H1 (cell line): ENCODE measurements at regions of chr14 and their contacts with region 1.

Region 1: DNA sequence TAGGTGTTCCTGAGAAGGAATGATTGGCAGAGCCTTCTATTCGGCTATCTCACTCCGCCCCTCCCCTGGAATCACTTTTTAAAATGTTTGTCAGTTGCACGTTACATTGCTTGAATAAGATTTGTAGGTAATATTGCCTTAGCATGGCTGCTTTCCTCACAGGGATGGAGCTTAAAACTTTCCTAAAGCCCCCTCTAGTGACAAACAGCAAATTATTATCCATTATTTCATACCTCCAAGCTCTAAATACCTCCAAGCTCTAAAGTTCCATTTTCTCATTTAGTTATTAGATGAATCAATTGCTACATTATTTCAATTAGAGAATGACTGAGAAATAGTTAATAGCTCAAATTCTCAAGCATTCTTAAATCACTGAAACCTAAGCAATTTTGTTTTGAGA is 5.1 kb upstream of the SPATA7 start:
- DNase-seq: no peak
- H3K4me3 ChIP-seq: no peak overlapping the region
- H3K27ac ChIP-seq: no peak overlapping the region
- H3K4me1 ChIP-seq: peaks cover 1 to 5% (median 4%) of the 10 kb centered on the region in 4 experiments; a peak in 4 of 7 replicates
- H3K27me3 ChIP-seq: no peaks in the 10 kb centered on the region
- CTCF ChIP-seq: peak in 1 of 3 experiments; percentile 19; a peak in 2 of 4 replicates
- EP300 ChIP-seq: no peak
- POLR2A ChIP-seq: no peak
- RAD21 ChIP-seq: peak; percentile 51

Region 2: DNA sequence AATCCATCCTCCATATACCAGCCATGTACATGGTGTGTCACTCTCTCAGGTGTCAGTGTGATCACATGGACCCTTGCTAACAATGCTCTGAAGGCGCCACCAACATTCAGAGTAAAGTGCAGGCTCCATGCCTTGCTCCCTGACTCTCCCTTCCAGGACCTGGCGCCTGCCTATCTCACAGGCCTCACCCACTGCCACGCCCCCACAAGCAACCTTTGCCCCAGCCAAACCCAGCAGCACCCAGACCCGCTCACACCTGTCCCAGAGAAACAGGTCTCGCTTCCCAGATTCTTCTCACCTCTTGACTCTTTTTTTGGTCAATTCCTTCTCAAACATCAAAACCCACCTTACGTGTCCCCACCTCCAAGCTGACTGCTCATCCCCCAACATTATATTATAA is 109.6 kb before region 1 on chr14:
- CTCF ChIA-PET with region 1: interaction called, 13 read pairs
- POLR2A ChIA-PET with region 1: no interaction called
- DNase-seq: peak; percentile 19 to 71
- H3K4me3 ChIP-seq: no peak overlapping the region
- H3K27ac ChIP-seq: no peak overlapping the region
- H3K4me1 ChIP-seq: peaks cover 0 to 4% (median 2%) of the 10 kb centered on the region in 4 experiments; a peak in 3 of 7 replicates
- H3K27me3 ChIP-seq: no peaks in the 10 kb centered on the region; a peak in 1 of 7 replicates
- CTCF ChIP-seq: no peak
- EP300 ChIP-seq: no peak
- POLR2A ChIP-seq: no peak
- RAD21 ChIP-seq: no peak

Region 3: GRCh38 chr14:88364710-88365413 is 15.5 kb before region 1 on chr14:
- CTCF ChIA-PET with region 1: interaction called, 16 read pairs
- POLR2A ChIA-PET with region 1: no interaction called
- DNase-seq: peak in 1 of 2 experiments; percentile 49
- H3K4me3 ChIP-seq: peak overlapping the region in 3 of 4 experiments; percentile 6 to 49 (median 15); a peak in 2 of 8 replicates
- H3K27ac ChIP-seq: 0 out of 2 replicates have a peak overlapping the region, but pooled peaks have one; percentile 52
- H3K4me1 ChIP-seq: peaks cover 0 to 17% (median 9%) of the 10 kb centered on the region in 4 experiments; a peak in 5 of 7 replicates
- H3K27me3 ChIP-seq: no peaks in the 10 kb centered on the region
- CTCF ChIP-seq: no peak
- EP300 ChIP-seq: 0 out of 3 replicates have a peak, but pooled peaks of 1 of the 2 experiments have one; percentile 24
- POLR2A ChIP-seq: no peak
- RAD21 ChIP-seq: no peak